CD4-positive, alpha-beta memory T cell (primary cell): ENCODE measurements at regions of chr9 and their contacts with region 1.

Region 1: DNA sequence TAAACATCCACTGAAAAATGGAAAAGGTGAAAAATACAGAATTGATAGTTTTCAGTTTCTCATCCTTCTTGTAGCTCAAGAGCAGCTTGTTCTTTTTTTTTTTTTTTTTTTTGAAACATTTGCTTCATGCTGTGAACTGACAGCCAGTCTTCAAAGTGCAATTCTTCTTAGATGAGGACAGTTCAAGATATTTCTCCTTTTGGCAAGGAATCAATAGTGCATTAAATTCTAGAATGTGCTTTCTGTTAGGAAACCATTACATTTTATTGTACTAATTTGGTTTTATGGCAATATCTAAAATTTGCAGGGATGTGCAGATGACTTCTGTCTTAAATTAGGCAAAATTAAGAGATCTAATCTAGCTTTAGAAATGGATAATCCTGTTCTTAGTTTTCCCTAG is 969.3 kb upstream of the ACO1 start:
- DNase-seq: no peak
- H3K4me3 ChIP-seq: no peak overlapping the region
- H3K4me3 Mint-ChIP-seq: no peak overlapping the region
- H3K27ac ChIP-seq: no peak overlapping the region
- H3K27ac Mint-ChIP-seq: peak overlapping the region in 1 of 7 donors; percentile 46
- H3K4me1 ChIP-seq: no peaks in the 10 kb centered on the region
- H3K4me1 Mint-ChIP-seq: peaks cover 0 to 8% (median 3%) of the 10 kb centered on the region in 4 donors
- H3K27me3 ChIP-seq: no peaks in the 10 kb centered on the region
- H3K27me3 Mint-ChIP-seq: no peaks in the 10 kb centered on the region

Region 2: GRCh38 chr9:31445960-31446359 is 30.8 kb after region 1 on chr9:
- CTCF ChIA-PET with region 1: no interaction called
- POLR2A ChIA-PET with region 1: no interaction called
- intact Hi-C with region 1: loop called (anchors 1 kb)
- DNase-seq: no peak
- H3K4me3 ChIP-seq: no peak overlapping the region
- H3K4me3 Mint-ChIP-seq: no peak overlapping the region
- H3K27ac ChIP-seq: no peak overlapping the region
- H3K27ac Mint-ChIP-seq: peak overlapping the region in 1 of 7 donors; percentile 38
- H3K4me1 ChIP-seq: no peaks in the 10 kb centered on the region
- H3K4me1 Mint-ChIP-seq: peaks cover 2 to 13% (median 6%) of the 10 kb centered on the region in 4 donors
- H3K27me3 ChIP-seq: no peaks in the 10 kb centered on the region
- H3K27me3 Mint-ChIP-seq: no peaks in the 10 kb centered on the region